GM12878 (cell line): ENCODE measurements at regions of chr5 and their contacts with region 1.

Region 1: GRCh38 chr5:139273572-139274289 is 19.8 kb upstream of the MATR3 start:
- DNase-seq: peak; percentile 61
- ATAC-seq: peak; percentile 87
- H3K4me3 ChIP-seq: peak overlapping the region; percentile 82
- H3K27ac ChIP-seq: peak overlapping the region; percentile 90
- H3K4me1 ChIP-seq: peaks cover 38% of the 10 kb centered on the region
- H3K27me3 ChIP-seq: no peaks in the 10 kb centered on the region
- CTCF ChIP-seq: peak in 2 of 3 experiments; percentile 25 to 37; a peak in 2 of 6 replicates
- EP300 ChIP-seq: peak in 1 of 2 experiments; percentile 57; a peak in 2 of 4 replicates
- POLR2A ChIP-seq: peak; percentile 95
- RAD21 ChIP-seq: 0 out of 2 replicates have a peak, but pooled peaks have one; percentile 18

Region 2: GRCh38 chr5:138641547-138642298 is 632.0 kb before region 1 on chr5:
- CTCF ChIA-PET with region 1: interaction called, 3 read pairs
- POLR2A ChIA-PET with region 1: interaction called, 3 read pairs
- RAD21 ChIA-PET with region 1: no interaction called
- SMC1A ChIA-PET with region 1: interaction called, 3 read pairs
- in situ Hi-C with region 1: loop called (anchors 25 kb)
- intact Hi-C with region 1: no loop called
- DNase-seq: no peak
- ATAC-seq: peak; percentile 91
- H3K4me3 ChIP-seq: no peak overlapping the region
- H3K27ac ChIP-seq: no peak overlapping the region
- H3K4me1 ChIP-seq: no peaks in the 10 kb centered on the region
- H3K27me3 ChIP-seq: no peaks in the 10 kb centered on the region; a peak in 2 of 4 replicates
- CTCF ChIP-seq: peak; percentile 71 to 78 (median 72)
- EP300 ChIP-seq: no peak
- POLR2A ChIP-seq: no peak
- RAD21 ChIP-seq: peak; percentile 86

Region 3: DNA sequence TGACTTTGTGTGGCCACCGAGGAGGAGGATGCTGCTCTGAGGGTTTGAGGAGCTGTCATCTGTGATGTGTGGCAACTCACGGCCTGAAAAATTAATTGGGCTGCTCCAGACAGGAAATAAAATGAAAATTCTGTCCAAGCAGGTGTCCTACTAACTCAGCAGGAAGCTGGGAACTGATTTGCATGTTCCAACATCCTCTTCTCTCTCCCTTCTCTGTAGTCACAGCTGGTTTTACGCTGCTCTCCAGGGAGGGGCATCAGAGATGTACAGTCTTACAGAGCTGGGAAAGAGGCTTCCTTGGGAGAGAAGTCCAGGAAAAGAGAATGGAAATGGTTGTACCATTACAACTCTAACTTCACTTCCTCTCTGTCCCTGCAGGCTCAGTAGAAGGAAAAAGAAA is 51.4 kb before region 1 on chr5:
- CTCF ChIA-PET with region 1: no interaction called
- POLR2A ChIA-PET with region 1: no interaction called
- RAD21 ChIA-PET with region 1: no interaction called
- SMC1A ChIA-PET with region 1: no interaction called
- in situ Hi-C with region 1: no loop called
- intact Hi-C with region 1: no loop called
- DNase-seq: no peak
- ATAC-seq: no peak
- H3K4me3 ChIP-seq: no peak overlapping the region
- H3K27ac ChIP-seq: no peak overlapping the region
- H3K4me1 ChIP-seq: no peaks in the 10 kb centered on the region
- H3K27me3 ChIP-seq: no peaks in the 10 kb centered on the region
- CTCF ChIP-seq: no peak
- EP300 ChIP-seq: no peak
- POLR2A ChIP-seq: no peak
- RAD21 ChIP-seq: no peak

Region 4: GRCh38 chr5:139287890-139288635 is 14.3 kb after region 1 on chr5:
- CTCF ChIA-PET with region 1: interaction called, 16 read pairs
- POLR2A ChIA-PET with region 1: interaction called, 21 read pairs
- RAD21 ChIA-PET with region 1: interaction called, 31 read pairs
- SMC1A ChIA-PET with region 1: interaction called, 136 read pairs
- in situ Hi-C with region 1: no loop called
- intact Hi-C with region 1: no loop called
- DNase-seq: no peak
- ATAC-seq: peak; percentile 43
- H3K4me3 ChIP-seq: no peak overlapping the region
- H3K27ac ChIP-seq: no peak overlapping the region
- H3K4me1 ChIP-seq: no peaks in the 10 kb centered on the region
- H3K27me3 ChIP-seq: no peaks in the 10 kb centered on the region
- CTCF ChIP-seq: peak in 2 of 3 experiments; percentile 20 to 25; a peak in 2 of 6 replicates
- EP300 ChIP-seq: no peak
- POLR2A ChIP-seq: no peak
- RAD21 ChIP-seq: peak; percentile 58

Region 5: DNA sequence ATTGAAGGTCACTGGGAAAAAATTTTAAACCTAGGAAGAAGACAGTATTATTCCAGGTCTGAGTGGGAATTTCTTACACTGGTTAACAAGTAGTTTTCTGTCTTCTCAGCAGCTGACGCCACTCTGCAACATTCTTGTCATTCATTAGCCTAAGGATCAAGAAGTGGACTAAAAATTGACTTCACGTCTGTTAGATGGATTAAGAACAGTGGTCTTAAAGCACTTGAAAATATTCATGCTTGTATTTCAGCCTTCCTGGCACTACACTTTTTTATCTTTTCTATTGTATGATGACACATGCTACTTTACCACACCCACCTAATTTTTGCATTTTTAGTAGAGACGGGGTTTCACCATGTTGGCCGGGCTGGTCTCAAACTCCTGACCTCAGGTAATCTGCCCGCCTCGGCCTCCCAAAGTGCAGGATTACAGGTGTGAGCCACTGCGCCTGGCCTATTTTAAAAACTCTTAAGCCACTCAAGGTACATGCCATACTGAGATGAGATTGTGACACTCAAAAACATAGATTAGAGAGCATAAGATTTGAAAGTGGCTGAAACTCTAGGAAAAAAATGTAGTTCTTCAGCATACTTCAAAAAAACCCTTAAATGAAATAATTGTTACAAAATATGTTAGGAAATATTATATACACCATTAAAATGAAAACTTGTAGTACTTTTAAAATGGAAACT is 28.2 kb after region 1 on chr5:
- CTCF ChIA-PET with region 1: interaction called, 9 read pairs
- POLR2A ChIA-PET with region 1: interaction called, 14 read pairs
- RAD21 ChIA-PET with region 1: interaction called, 31 read pairs
- SMC1A ChIA-PET with region 1: interaction called, 136 read pairs
- in situ Hi-C with region 1: no loop called
- intact Hi-C with region 1: no loop called
- DNase-seq: no peak
- ATAC-seq: peak; percentile 2
- H3K4me3 ChIP-seq: no peak overlapping the region
- H3K27ac ChIP-seq: no peak overlapping the region
- H3K4me1 ChIP-seq: peaks cover 37% of the 10 kb centered on the region
- H3K27me3 ChIP-seq: no peaks in the 10 kb centered on the region
- CTCF ChIP-seq: no peak
- EP300 ChIP-seq: no peak
- POLR2A ChIP-seq: no peak
- RAD21 ChIP-seq: no peak

Region 6: DNA sequence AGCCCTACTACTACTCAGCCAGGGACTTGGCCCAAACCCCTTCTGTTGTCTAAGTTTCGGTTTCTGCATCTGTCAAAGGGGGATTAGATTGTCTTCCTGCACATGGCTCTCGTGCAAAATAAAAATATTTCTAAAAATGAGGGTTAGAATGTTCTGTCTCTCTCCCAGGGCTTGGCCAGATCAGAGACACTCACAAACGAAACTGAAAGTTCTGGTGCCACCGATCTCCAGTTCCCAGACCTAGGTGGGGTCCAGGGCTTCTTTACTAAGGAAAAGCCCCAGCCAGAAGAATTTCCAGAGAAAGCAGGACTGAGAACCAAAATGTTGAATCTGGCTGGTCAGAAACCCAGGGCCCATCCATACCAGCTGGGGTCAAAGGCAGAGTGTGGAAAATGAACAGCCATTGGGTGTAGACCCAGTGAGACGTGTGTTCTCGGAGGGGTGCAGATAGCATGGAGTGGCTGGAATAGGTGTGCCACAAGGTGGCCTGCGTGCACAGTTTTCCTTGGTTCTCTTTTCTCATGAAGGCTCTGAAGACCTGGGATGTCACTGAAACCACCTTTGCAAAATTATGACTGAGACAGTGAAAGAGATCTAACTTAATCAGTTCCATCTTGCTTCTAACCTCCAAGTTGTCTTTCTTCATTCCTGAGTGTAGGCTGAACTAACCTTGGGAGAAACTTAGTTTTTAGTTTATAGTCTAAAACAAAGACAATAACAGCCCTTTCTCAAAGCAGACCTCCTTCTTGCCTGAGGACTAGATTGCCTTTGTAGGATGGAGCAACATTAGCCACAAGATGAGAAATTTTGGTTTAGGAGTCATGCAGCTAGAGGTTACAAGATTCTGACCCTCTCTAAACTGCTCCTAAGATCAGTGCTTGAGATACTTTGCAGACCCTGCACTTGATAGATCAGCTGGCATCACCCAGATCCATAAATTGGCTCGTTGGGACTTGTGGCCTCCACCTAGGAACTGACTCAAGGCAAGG is 111.6 kb after region 1 on chr5:
- CTCF ChIA-PET with region 1: interaction called, 4 read pairs
- POLR2A ChIA-PET with region 1: interaction called, 13 read pairs
- RAD21 ChIA-PET with region 1: interaction called, 20 read pairs
- SMC1A ChIA-PET with region 1: interaction called, 12 read pairs
- in situ Hi-C with region 1: no loop called
- intact Hi-C with region 1: loop called (anchors 5 kb)
- DNase-seq: no peak
- ATAC-seq: peak; percentile 2; the same call in 2 of the 3 replicates
- H3K4me3 ChIP-seq: peak overlapping the region; percentile 17; the same call in 1 of the 2 replicates
- H3K27ac ChIP-seq: peak overlapping the region; percentile 62
- H3K4me1 ChIP-seq: peaks cover 42% of the 10 kb centered on the region
- H3K27me3 ChIP-seq: no peaks in the 10 kb centered on the region
- CTCF ChIP-seq: peak; percentile 9 to 29 (median 9); a peak in 2 of 6 replicates
- EP300 ChIP-seq: no peak
- POLR2A ChIP-seq: no peak
- RAD21 ChIP-seq: 0 out of 2 replicates have a peak, but pooled peaks have one; percentile 17

Region 7: GRCh38 chr5:139524932-139525585 is 251.3 kb after region 1 on chr5:
- CTCF ChIA-PET with region 1: no interaction called
- POLR2A ChIA-PET with region 1: no interaction called
- RAD21 ChIA-PET with region 1: interaction called, 3 read pairs
- SMC1A ChIA-PET with region 1: no interaction called
- in situ Hi-C with region 1: no loop called
- intact Hi-C with region 1: loop called (anchors 5 kb)
- DNase-seq: no peak
- ATAC-seq: peak; percentile 88
- H3K4me3 ChIP-seq: 0 out of 2 replicates have a peak overlapping the region, but pooled peaks have one; percentile 2
- H3K27ac ChIP-seq: peak overlapping the region; percentile 59
- H3K4me1 ChIP-seq: peaks cover 28% of the 10 kb centered on the region
- H3K27me3 ChIP-seq: no peaks in the 10 kb centered on the region
- CTCF ChIP-seq: no peak
- EP300 ChIP-seq: 0 out of 4 replicates have a peak, but pooled peaks of 1 of the 2 experiments have one; percentile 24
- POLR2A ChIP-seq: no peak
- RAD21 ChIP-seq: no peak